ENCODE measurements at regions of chr5 and their contacts with region 1.

Region 1: DNA sequence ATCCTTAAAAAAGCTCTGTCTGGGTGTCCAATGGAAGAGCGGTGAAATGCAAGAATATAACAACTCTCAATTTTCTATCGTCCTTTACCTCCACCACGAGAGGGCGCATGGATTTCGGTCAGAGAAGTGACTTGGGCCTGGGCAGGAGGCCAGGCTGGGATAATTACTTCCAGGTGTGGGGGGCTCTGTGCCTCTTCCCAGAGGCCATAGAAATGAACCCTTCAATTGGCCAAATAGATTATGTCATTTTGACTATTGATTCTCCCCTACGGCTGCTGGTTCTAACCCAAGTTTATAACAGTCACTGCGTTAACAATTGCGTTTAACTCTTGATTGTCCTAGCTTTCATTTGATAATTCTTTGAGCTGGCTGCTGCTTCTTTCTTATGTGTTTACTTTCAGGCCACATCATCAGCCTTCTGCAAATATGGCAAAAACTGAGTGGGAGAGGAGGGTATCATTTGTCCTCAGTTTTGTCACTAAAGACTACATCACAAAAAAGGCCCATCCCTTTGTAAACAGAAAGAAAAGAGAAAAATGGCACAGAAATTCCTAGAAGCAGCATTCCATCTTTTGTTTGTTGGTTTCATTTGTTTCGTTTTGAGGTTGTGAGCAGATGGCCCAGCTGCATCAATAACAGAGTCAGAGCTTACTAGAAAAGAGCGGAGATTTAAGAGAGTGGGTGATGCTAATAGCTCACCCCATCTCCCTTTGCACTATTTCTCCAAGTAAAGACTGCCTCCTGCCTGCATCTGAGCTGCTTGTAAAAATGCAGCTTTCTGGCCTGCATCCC is 45.4 kb upstream of the ZFR start:
- DNase-seq: peak; percentile 55 to 87 (median 73)
- ATAC-seq: peak; percentile 83
- H3K4me3 ChIP-seq: no peak overlapping the region
- H3K4me1 ChIP-seq: peaks cover 4% of the 10 kb centered on the region
- CTCF ChIP-seq: peak; percentile 19

Region 2: GRCh38 chr5:32589942-32590869 is 100.2 kb after region 1 on chr5:
- intact Hi-C with region 1: loop called in 1 of 2 experiments (anchors 5 kb)
- DNase-seq: peak in 1 of 3 donors; percentile 84
- ATAC-seq: no peak
- H3K4me3 ChIP-seq: no peak overlapping the region
- H3K4me1 ChIP-seq: peaks cover 21% of the 10 kb centered on the region
- CTCF ChIP-seq: peak; percentile 51

Region 3: GRCh38 chr5:32613050-32613672 is 123.2 kb after region 1 on chr5:
- intact Hi-C with region 1: loop called in 1 of 2 experiments (anchors 5 kb)
- DNase-seq: peak; percentile 66 to 94 (median 87)
- ATAC-seq: peak; percentile 97
- H3K4me3 ChIP-seq: no peak overlapping the region
- H3K4me1 ChIP-seq: peaks cover 4% of the 10 kb centered on the region
- CTCF ChIP-seq: peak; percentile 72

Measured in mucosa of descending colon (tissue), 3 donors.